ENCODE measurements at regions of chr3 and their contacts with region 1.

Region 1: DNA sequence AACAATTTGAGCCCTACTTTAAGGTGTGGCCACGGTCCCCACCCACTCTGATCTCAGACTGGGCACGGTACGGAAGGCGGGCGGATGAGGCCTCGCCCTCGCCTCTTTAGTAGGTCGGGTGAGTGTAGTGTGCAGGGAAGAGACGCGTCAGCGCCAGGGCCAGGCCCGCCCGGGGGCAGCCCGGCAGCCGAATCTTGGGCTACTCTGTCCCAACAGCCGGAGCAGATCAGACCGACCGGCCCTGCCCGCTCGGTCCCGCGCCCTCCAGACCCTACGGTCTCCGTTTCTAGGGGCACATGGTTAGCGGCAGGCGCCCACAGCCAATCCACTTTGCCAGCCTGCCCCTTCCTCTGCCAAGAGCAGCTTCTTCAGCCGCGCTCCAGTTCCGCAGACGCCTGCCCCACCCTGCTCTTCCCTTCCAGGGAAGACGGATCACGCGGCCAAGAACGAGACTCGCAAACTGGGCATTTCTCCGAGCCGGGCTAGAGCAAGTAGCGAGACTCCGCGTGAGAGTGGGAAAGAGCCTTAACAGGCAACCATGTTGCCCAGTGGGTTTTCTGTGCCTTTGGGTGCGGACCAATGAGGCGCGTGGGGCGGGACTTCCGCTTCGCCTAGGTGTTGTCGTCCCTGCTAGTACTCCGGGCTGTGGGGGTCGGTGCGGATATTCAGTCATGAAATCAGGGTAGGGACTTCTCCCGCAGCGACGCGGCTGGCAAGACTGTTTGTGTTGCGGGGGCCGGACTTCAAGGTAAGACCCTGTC is at the start of gene RNF13:
- DNase-seq: peak; percentile 88
- H3K4me3 ChIP-seq: peak within 1 kb of the TSS; percentile 77
- H3K27me3 ChIP-seq: no peaks in the 10 kb centered on the region
- CTCF ChIP-seq: no peak
- polyA plus RNA-seq, gene RNF13: 30.7 and 54.1 TPM in 2 replicates

Region 2: GRCh38 chr3:149512209-149512782 is 300.5 kb before region 1 on chr3:
- CTCF ChIA-PET with region 1: interaction called, 15 read pairs
- POLR2A ChIA-PET with region 1: no interaction called
- DNase-seq: no peak
- H3K4me3 ChIP-seq: no peak overlapping the region
- H3K27me3 ChIP-seq: no peaks in the 10 kb centered on the region
- CTCF ChIP-seq: peak; percentile 86

Region 3: GRCh38 chr3:149765762-149766334 is 46.9 kb before region 1 on chr3:
- CTCF ChIA-PET with region 1: interaction called, 167 read pairs
- POLR2A ChIA-PET with region 1: interaction called, 4 read pairs
- DNase-seq: no peak
- H3K4me3 ChIP-seq: no peak overlapping the region
- H3K27me3 ChIP-seq: peaks cover 6% of the 10 kb centered on the region
- CTCF ChIP-seq: peak; percentile 67

Region 4: DNA sequence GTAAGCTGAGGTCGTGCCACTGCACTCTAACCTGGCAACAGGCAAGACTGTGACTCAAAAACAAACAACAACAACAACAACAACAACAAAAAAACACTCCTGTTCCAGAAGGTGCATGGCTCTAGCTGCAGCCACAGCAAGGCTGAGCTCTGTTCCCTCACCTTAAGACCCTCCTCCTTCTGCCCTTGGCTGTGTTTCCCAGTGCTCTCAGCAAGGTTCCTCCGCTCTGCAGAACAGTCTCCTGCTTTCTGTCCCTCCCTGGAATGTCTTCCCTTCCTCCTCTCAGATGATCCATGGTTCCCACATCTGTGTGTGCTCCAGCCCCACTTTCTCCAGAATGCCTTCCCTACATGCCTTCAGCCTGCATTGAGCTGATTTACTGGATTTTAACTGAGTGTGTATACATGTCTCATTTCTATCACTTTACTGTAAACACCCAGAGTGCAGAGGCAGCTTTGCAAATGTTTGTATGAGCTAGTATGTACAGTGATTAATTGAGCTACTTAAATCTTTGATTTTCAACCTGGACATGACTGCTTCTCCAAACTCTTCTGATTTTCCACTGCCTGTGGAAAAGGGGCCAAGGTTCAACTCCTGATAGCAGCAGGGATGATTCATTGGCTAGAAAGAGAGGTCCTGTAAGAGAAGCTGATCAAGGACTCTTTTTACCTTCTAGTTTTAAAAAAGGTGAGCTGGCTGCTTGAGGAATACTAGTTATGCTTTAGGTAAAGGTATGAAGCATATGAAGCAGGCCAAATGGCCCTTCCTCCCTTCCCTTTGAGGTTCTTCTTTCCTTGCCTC is 35.2 kb before region 1 on chr3:
- CTCF ChIA-PET with region 1: interaction called, 167 read pairs
- POLR2A ChIA-PET with region 1: no interaction called
- DNase-seq: no peak
- H3K4me3 ChIP-seq: no peak overlapping the region
- H3K27me3 ChIP-seq: no peaks in the 10 kb centered on the region
- CTCF ChIP-seq: no peak

Region 5: GRCh38 chr3:149790268-149790667 is 22.5 kb before region 1 on chr3:
- CTCF ChIA-PET with region 1: interaction called, 18 read pairs
- POLR2A ChIA-PET with region 1: no interaction called
- DNase-seq: no peak
- H3K4me3 ChIP-seq: no peak overlapping the region
- H3K27me3 ChIP-seq: no peaks in the 10 kb centered on the region
- CTCF ChIP-seq: no peak

Region 6: DNA sequence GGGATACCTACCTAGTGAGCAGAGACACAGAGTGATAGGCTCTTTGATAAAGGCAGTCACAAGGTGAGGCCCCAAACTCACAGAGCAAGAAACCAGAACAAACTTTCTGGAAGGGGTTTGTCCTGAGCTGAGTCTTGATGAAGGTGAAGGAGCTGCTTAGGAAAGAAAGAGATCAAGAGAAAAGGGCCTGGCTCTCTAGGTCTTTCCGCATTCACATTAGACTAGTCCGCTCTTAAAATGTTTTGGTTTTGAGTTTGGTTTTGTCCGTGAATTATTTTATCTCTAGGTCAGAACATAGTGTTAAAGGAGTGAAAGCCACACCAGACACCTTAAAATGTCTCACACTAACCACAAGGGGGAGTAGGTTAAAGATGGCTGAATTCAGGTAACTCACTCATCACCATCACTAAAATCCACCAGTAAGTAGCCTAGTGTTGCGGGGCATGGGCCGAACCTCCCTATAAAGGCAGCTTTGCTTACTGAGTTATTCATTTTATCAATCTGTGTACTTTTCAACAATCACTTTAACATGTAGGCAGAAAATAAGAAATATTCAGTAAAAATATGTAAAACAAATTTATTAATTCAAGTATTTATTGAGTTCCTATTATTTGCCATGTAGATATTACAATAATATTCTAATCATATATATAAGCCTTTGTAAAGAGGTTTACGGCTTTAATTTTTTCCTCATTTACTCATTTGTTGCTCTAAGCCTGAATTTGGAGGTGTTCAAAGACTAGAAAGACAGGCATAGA is 473.8 kb after region 1 on chr3:
- CTCF ChIA-PET with region 1: no interaction called
- POLR2A ChIA-PET with region 1: no interaction called
- DNase-seq: no peak
- H3K4me3 ChIP-seq: no peak overlapping the region
- H3K27me3 ChIP-seq: no peaks in the 10 kb centered on the region
- CTCF ChIP-seq: peak; percentile 46

Measured in BJ (cell line).